Dorsolateral prefrontal cortex (tissue), 120 donors: ENCODE measurements at regions of chr17 and their contacts with region 1.

Region 1: GRCh38 chr17:63621766-63622519 is at the start of gene MAP3K3:
- DNase-seq: peak; percentile 98 to 100 (median 100)
- H3K4me3 ChIP-seq: peak within 1 kb of the TSS; percentile 59 to 99 (median 83)
- H3K27ac ChIP-seq: peak within 1 kb of the TSS; percentile 50 to 97 (median 90)
- H3K27me3 ChIP-seq: no peaks in the 10 kb centered on the region
- CTCF ChIP-seq: peak in 35 of 56 donors; percentile 11 to 58 (median 31)
- total RNA-seq, gene MAP3K3: 24.2 to 55.3 (median 37.6) TPM

Region 2: GRCh38 chr17:63600569-63601438 is 21.1 kb before region 1 on chr17 and contains the start of gene TACO1:
- intact Hi-C with region 1: loop called in 1 of 2 experiments (anchors 2 kb)
- DNase-seq: peak; percentile 62 to 91 (median 78)
- H3K4me3 ChIP-seq: peak within 1 kb of the TSS; percentile 52 to 100 (median 95)
- H3K27ac ChIP-seq: peak within 1 kb of the TSS in 56 of 59 donors; percentile 2 to 93 (median 78)
- H3K27me3 ChIP-seq: no peaks in the 10 kb centered on the region
- CTCF ChIP-seq: peak in 42 of 56 donors; percentile 8 to 57 (median 33)
- total RNA-seq, gene TACO1: 11.2 to 27.0 (median 20.5) TPM

Region 3: DNA sequence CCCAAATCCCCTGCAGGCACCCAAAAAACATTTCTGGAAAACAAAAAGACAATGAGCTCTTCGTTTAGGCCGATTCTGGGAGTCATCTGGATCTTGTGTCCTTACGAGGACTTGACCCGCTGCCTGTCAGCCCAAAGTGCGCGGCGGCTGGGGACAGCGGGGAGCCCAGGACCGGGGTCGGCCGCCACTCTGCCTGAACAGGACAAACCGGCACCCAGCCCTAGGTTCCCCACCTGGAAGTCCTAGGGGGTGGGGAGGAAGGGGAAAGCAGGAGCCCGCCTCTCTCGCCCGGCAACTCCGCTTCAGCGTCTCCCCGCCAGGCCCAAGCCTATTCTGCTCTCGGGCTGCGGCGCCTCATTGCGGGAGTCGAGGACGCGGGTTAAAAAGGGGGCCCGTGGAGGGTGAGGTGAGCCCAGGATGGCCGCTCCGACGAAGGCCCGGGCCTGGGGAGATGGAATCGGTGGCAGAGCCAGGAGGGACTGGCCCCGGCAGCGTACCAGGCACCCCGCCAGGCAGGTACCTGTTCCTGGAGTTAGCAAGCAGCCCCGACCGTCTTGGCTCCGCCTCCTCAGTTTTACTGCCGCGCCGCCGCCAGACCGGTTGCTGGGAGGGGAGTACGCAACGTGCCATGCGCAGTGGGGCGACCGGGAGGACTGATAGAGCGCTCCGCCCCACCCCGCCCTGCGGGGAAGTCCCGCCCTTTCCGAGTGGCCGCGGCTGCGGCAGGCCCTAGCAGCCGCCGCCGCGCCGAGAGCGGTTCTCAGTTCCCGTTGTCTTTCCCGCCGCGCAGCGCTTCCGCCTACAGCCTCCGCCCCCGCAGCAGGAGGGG is 119.5 kb after region 1 on chr17 and contains the start of gene STRADA:
- intact Hi-C with region 1: loop called (anchors 2 to 5 kb)
- DNase-seq: peak; percentile 94 to 99 (median 97)
- H3K4me3 ChIP-seq: peak within 1 kb of the TSS; percentile 65 to 100 (median 91)
- H3K27ac ChIP-seq: peak within 1 kb of the TSS; percentile 40 to 97 (median 88)
- H3K27me3 ChIP-seq: no peaks in the 10 kb centered on the region
- CTCF ChIP-seq: peak in 31 of 56 donors; percentile 6 to 57 (median 30)
- total RNA-seq, gene STRADA: 47.3 to 105 (median 79.1) TPM

Region 4: GRCh38 chr17:63834431-63835166 is 212.7 kb after region 1 on chr17:
- intact Hi-C with region 1: loop called in 1 of 2 experiments (anchors 5 kb)
- DNase-seq: peak in 8 of 10 donors; percentile 41 to 86 (median 72)
- H3K4me3 ChIP-seq: no peak overlapping the region
- H3K27ac ChIP-seq: peak overlapping the region in 53 of 59 donors; percentile 0 to 100 (median 66)
- H3K27me3 ChIP-seq: no peaks in the 10 kb centered on the region
- CTCF ChIP-seq: peak in 55 of 56 donors; percentile 20 to 80 (median 60)